Aorta (tissue), 5 donors: ENCODE measurements at regions of chr9 and their contacts with region 1.

Region 1: GRCh38 chr9:115591584-115591984 is 473.6 kb upstream of the TNC start:
- DNase-seq: peak in 1 of 2 donors; percentile 80
- ATAC-seq: peak; percentile 93
- H3K4me3 ChIP-seq: no peak overlapping the region
- H3K27ac ChIP-seq: peak overlapping the region in 1 of 2 donors; percentile 66
- H3K4me1 ChIP-seq: peaks cover 3 to 5% of the 10 kb centered on the region in 2 donors
- H3K27me3 ChIP-seq: no peaks in the 10 kb centered on the region

Region 2: DNA sequence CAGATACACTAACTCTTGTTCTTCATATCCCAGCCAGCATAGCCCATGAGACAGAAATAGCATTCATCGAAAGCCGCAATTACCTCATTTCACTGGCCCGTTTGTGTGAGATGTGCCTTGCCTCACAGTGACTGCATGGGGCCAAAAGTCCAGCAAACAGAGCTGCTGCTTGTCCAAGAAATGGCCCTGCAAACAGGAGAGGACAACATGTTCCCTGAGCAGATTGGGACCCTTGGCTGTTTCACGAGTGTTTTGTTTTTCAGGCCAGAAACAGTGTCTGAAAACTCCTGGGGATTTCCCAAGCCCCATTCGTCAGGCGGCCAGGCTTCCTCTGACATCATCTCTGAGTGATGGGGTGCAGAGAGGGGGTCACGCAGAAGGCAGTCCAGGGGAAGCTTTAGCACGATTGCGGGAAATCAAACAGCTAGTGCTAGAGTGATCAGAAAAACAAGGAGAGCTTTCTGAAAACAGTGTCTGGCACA is 58.4 kb after region 1 on chr9:
- intact Hi-C with region 1: loop called in 1 of 2 experiments (anchors 10 kb)
- DNase-seq: peak; percentile 78 to 86
- ATAC-seq: peak; percentile 92
- H3K4me3 ChIP-seq: no peak overlapping the region
- H3K27ac ChIP-seq: peak overlapping the region; percentile 75 to 84
- H3K4me1 ChIP-seq: peaks cover 0 to 9% of the 10 kb centered on the region in 2 donors
- H3K27me3 ChIP-seq: no peaks in the 10 kb centered on the region

Region 3: GRCh38 chr9:115757461-115757860 is 165.9 kb after region 1 on chr9:
- intact Hi-C with region 1: loop called in 1 of 2 experiments (anchors 5 kb)
- DNase-seq: no peak
- ATAC-seq: no peak
- H3K4me3 ChIP-seq: no peak overlapping the region
- H3K27ac ChIP-seq: no peak overlapping the region
- H3K4me1 ChIP-seq: peaks cover 2% of the 10 kb centered on the region in 2 donors
- H3K27me3 ChIP-seq: no peaks in the 10 kb centered on the region

Region 4: GRCh38 chr9:115777610-115778009 is 186.0 kb after region 1 on chr9:
- intact Hi-C with region 1: no loop called
- DNase-seq: no peak
- ATAC-seq: no peak
- H3K4me3 ChIP-seq: no peak overlapping the region
- H3K27ac ChIP-seq: no peak overlapping the region
- H3K4me1 ChIP-seq: no peaks in the 10 kb centered on the region
- H3K27me3 ChIP-seq: no peaks in the 10 kb centered on the region

Region 5: DNA sequence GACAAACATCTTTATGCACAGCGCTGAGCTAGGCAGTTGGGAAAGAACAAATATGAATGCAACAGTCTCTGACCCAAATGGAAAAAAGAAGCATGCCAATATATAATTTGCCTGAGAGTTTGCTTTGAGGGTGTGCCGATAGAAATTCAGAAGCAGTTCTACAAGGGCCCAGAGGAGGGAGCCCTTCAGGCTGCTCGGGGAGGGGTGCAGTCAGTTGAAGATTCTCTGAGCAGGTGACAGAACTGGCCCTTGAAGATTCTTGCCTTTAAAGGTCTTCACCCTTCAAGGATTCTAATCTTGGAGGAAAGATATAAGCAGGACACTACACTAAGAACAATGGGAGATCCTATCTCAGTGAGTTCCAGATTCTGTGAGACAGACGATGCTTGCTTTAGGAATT is 558.3 kb after region 1 on chr9:
- intact Hi-C with region 1: loop called (anchors 5 kb)
- DNase-seq: no peak
- ATAC-seq: peak; percentile 48
- H3K4me3 ChIP-seq: no peak overlapping the region
- H3K27ac ChIP-seq: no peak overlapping the region
- H3K4me1 ChIP-seq: no peaks in the 10 kb centered on the region
- H3K27me3 ChIP-seq: no peaks in the 10 kb centered on the region

Region 6: DNA sequence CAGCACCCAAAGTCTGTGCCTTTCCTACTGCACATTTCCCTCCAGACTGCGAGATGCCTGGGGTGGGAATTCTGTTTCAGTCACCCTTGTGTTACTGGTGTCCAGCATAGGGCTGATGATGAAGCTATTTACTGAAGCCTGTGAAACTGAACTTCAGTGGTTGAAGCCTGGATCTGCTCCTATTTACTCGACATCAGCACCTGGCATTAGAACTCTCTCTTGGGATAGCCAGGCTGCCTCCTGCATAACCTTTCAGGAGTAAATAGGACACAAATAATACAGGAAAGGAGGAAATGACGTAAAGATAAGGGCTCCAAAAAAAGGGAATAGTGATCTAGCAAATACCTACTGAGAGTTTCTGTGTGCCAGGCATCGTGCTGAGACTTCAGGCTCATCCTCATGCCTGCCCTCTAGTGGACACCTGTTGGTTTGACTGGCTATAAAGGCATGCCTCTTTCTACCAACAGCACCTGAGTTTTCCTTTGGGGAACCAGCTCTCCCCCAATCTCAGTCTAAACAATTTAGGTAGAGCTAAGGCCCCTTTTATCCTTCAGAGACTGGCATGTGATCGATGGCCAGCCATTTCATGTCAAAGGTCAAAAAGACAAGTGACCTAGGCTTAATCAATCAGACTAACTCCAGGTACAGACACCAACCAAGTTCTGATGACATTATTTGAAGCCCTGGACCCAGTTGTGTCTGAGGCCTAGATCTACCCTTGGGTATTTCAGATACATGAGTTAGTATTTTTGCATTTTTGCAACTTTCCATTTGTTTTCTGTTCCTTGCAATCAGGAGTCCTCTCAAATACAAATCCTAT is 903.4 kb after region 1 on chr9:
- intact Hi-C with region 1: loop called in 1 of 2 experiments (anchors 10 kb)
- DNase-seq: no peak
- ATAC-seq: no peak
- H3K4me3 ChIP-seq: no peak overlapping the region
- H3K27ac ChIP-seq: no peak overlapping the region
- H3K4me1 ChIP-seq: no peaks in the 10 kb centered on the region
- H3K27me3 ChIP-seq: peaks cover 0 to under 1% of the 10 kb centered on the region in 2 donors

Region 7: GRCh38 chr9:116661037-116661954 is 1069.7 kb after region 1 on chr9:
- intact Hi-C with region 1: loop called (anchors 5 to 10 kb)
- DNase-seq: no peak
- ATAC-seq: peak; percentile 83
- H3K4me3 ChIP-seq: no peak overlapping the region
- H3K27ac ChIP-seq: no peak overlapping the region
- H3K4me1 ChIP-seq: no peaks in the 10 kb centered on the region
- H3K27me3 ChIP-seq: no peaks in the 10 kb centered on the region